Transverse colon (tissue), 4 donors: ENCODE measurements at regions of chr17 and their contacts with region 1.

Region 1: GRCh38 chr17:10772425-10773380 is 31.2 kb downstream of the TMEM238L start:
- DNase-seq: peak; percentile 87
- H3K4me3 ChIP-seq: no peak overlapping the region
- H3K27ac ChIP-seq: peak overlapping the region; percentile 56 to 84 (median 76)
- H3K4me1 ChIP-seq: peaks cover 8 to 49% (median 18%) of the 10 kb centered on the region in 4 donors
- H3K27me3 ChIP-seq: no peaks in the 10 kb centered on the region
- CTCF ChIP-seq: peak; percentile 75 to 95 (median 81)
- EP300 ChIP-seq: no peak
- POLR2A ChIP-seq: no peak

Region 2: GRCh38 chr17:10050597-10051101 is 722.1 kb before region 1 on chr17:
- in situ Hi-C with region 1: no loop called
- intact Hi-C with region 1: no loop called
- DNase-seq: no peak
- H3K4me3 ChIP-seq: no peak overlapping the region
- H3K27ac ChIP-seq: peak overlapping the region; percentile 60 to 65 (median 62)
- H3K4me1 ChIP-seq: peaks cover 0 to 8% (median 0%) of the 10 kb centered on the region in 4 donors
- H3K27me3 ChIP-seq: no peaks in the 10 kb centered on the region
- CTCF ChIP-seq: no peak
- EP300 ChIP-seq: no peak
- POLR2A ChIP-seq: no peak

Region 3: DNA sequence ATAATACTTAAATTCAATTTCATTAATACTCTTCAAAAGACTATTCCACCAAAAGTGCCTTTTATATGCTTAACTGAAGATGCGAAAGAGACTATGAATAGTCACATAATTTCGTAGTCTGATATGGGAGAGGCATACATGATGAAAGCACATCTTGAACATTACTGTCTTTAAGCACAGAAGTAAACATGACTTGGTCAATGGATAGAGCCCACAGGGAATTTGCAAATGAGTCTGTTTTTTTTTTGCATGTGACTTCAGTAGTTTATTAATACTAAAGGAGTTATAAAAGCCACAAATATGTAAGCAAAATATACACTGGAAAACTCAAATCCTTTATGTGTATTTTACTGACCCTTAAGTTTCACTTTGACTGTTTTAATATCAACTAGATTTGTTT is 59.4 kb before region 1 on chr17:
- in situ Hi-C with region 1: loop called in 1 of 4 experiments (anchors 10 kb)
- intact Hi-C with region 1: no loop called
- DNase-seq: no peak
- H3K4me3 ChIP-seq: no peak overlapping the region
- H3K27ac ChIP-seq: no peak overlapping the region
- H3K4me1 ChIP-seq: no peaks in the 10 kb centered on the region
- H3K27me3 ChIP-seq: no peaks in the 10 kb centered on the region
- CTCF ChIP-seq: no peak
- EP300 ChIP-seq: no peak
- POLR2A ChIP-seq: no peak

Region 4: GRCh38 chr17:10836966-10837590 is 64.4 kb after region 1 on chr17:
- in situ Hi-C with region 1: loop called in 1 of 4 experiments (anchors 10 kb)
- intact Hi-C with region 1: no loop called
- DNase-seq: peak; percentile 77
- H3K4me3 ChIP-seq: no peak overlapping the region
- H3K27ac ChIP-seq: peak overlapping the region in 3 of 4 donors; percentile 37 to 71 (median 59)
- H3K4me1 ChIP-seq: peaks cover 0 to 24% (median 12%) of the 10 kb centered on the region in 4 donors
- H3K27me3 ChIP-seq: no peaks in the 10 kb centered on the region
- CTCF ChIP-seq: no peak
- EP300 ChIP-seq: no peak
- POLR2A ChIP-seq: no peak

Region 5: DNA sequence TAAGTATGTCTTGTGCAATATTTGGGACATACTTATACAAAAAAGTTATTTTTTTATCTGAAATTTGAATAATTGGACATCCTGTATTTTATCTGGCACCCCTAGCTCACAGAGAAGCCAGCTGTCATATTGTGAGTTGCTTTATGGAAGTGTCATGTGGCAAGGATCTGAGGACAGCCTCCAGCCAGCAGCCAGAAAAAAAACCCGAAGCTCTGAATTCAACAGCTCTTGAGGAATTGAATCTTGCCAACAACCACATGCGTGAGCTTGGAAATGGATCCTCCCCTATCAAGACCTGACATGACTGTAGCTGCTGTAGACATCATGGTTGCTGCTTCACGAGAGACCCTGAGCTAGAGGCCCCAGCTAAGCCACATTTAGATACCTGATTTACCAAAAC is 281.1 kb after region 1 on chr17:
- in situ Hi-C with region 1: loop called in 1 of 4 experiments (anchors 25 kb)
- intact Hi-C with region 1: no loop called
- DNase-seq: no peak
- H3K4me3 ChIP-seq: no peak overlapping the region
- H3K27ac ChIP-seq: no peak overlapping the region
- H3K4me1 ChIP-seq: peaks cover 0 to 3% (median 0%) of the 10 kb centered on the region in 4 donors
- H3K27me3 ChIP-seq: no peaks in the 10 kb centered on the region
- CTCF ChIP-seq: no peak
- EP300 ChIP-seq: no peak
- POLR2A ChIP-seq: no peak